ENCODE measurements at regions of chr3 and their contacts with region 1.

Region 1: DNA sequence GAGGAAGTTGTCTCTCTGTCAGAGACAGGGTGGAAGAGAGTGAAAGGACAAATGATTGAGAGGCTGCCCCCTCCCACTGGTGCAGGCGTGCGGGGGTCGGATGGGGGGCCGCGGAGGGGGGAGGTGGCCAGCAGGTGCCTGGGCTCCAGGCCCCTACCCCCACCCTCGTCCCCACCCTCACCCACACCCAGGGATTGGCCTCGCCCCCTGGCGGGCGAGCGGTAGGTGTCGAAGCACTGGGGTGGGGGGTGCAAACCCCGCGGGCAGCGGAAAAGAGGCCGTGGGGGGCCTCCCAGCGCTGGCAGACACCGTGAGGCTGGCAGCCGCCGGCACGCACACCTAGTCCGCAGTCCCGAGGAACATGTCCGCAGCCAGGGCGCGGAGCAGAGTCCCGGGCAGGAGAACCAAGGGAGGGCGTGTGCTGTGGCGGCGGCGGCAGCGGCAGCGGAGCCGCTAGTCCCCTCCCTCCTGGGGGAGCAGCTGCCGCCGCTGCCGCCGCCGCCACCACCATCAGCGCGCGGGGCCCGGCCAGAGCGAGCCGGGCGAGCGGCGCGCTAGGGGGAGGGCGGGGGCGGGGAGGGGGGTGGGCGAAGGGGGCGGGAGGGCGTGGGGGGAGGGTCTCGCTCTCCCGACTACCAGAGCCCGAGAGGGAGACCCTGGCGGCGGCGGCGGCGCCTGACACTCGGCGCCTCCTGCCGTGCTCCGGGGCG is at the start of gene KAT2B:
- DNase-seq: peak; percentile 70 to 94 (median 84)
- ATAC-seq: peak; percentile 72
- H3K4me3 ChIP-seq: peak within 1 kb of the TSS; percentile 82 to 91
- H3K4me3 Mint-ChIP-seq: peak within 1 kb of the TSS; percentile 98
- H3K27ac ChIP-seq: peak within 1 kb of the TSS; percentile 72 to 88
- H3K27ac Mint-ChIP-seq: peak within 1 kb of the TSS; percentile 98
- H3K4me1 ChIP-seq: peaks cover 45% of the 10 kb centered on the region
- H3K4me1 Mint-ChIP-seq: peaks cover 53% of the 10 kb centered on the region
- H3K27me3 ChIP-seq: no peaks in the 10 kb centered on the region
- H3K27me3 Mint-ChIP-seq: no peaks in the 10 kb centered on the region
- CTCF ChIP-seq: peak; percentile 95
- total RNA-seq, gene KAT2B: 37.5 to 37.9 TPM

Region 2: GRCh38 chr3:19885468-19885867 is 154.5 kb before region 1 on chr3:
- CTCF ChIA-PET with region 1: interaction called, 3 read pairs
- POLR2A ChIA-PET with region 1: no interaction called
- intact Hi-C with region 1: loop called in 1 of 2 experiments (anchors 2 kb)
- DNase-seq: peak in 2 of 9 experiments; percentile 40 to 53
- ATAC-seq: peak; percentile 20
- H3K4me3 ChIP-seq: no peak overlapping the region
- H3K4me3 Mint-ChIP-seq: no peak overlapping the region
- H3K27ac ChIP-seq: no peak overlapping the region
- H3K27ac Mint-ChIP-seq: no peak overlapping the region
- H3K4me1 ChIP-seq: no peaks in the 10 kb centered on the region
- H3K4me1 Mint-ChIP-seq: no peaks in the 10 kb centered on the region
- H3K27me3 ChIP-seq: no peaks in the 10 kb centered on the region
- H3K27me3 Mint-ChIP-seq: no peaks in the 10 kb centered on the region
- CTCF ChIP-seq: peak; percentile 57

Region 3: GRCh38 chr3:19934098-19934566 is 105.8 kb before region 1 on chr3 and contains the start of gene EFHB:
- CTCF ChIA-PET with region 1: no interaction called
- POLR2A ChIA-PET with region 1: no interaction called
- intact Hi-C with region 1: no loop called
- DNase-seq: no peak
- ATAC-seq: no peak
- H3K4me3 ChIP-seq: no peak within 1 kb of the TSS
- H3K4me3 Mint-ChIP-seq: no peak within 1 kb of the TSS
- H3K27ac ChIP-seq: no peak within 1 kb of the TSS
- H3K27ac Mint-ChIP-seq: no peak within 1 kb of the TSS
- H3K4me1 ChIP-seq: no peaks in the 10 kb centered on the region
- H3K4me1 Mint-ChIP-seq: no peaks in the 10 kb centered on the region
- H3K27me3 ChIP-seq: peaks cover 0 to 5% of the 10 kb centered on the region in 2 experiments
- H3K27me3 Mint-ChIP-seq: peaks cover 21% of the 10 kb centered on the region
- CTCF ChIP-seq: no peak
- total RNA-seq, gene EFHB: 0.44 to 1.9 TPM

Region 4: GRCh38 chr3:19994796-19995195 is 45.1 kb before region 1 on chr3:
- CTCF ChIA-PET with region 1: no interaction called
- POLR2A ChIA-PET with region 1: no interaction called
- intact Hi-C with region 1: loop called in 1 of 2 experiments (anchors 5 kb)
- DNase-seq: no peak
- ATAC-seq: no peak
- H3K4me3 ChIP-seq: no peak overlapping the region
- H3K4me3 Mint-ChIP-seq: no peak overlapping the region
- H3K27ac ChIP-seq: no peak overlapping the region
- H3K27ac Mint-ChIP-seq: no peak overlapping the region
- H3K4me1 ChIP-seq: no peaks in the 10 kb centered on the region
- H3K4me1 Mint-ChIP-seq: no peaks in the 10 kb centered on the region
- H3K27me3 ChIP-seq: no peaks in the 10 kb centered on the region
- H3K27me3 Mint-ChIP-seq: no peaks in the 10 kb centered on the region
- CTCF ChIP-seq: no peak

Region 5: GRCh38 chr3:20028818-20029430 is 11.0 kb before region 1 on chr3:
- CTCF ChIA-PET with region 1: no interaction called
- POLR2A ChIA-PET with region 1: no interaction called
- intact Hi-C with region 1: no loop called
- DNase-seq: no peak
- ATAC-seq: no peak
- H3K4me3 ChIP-seq: no peak overlapping the region
- H3K4me3 Mint-ChIP-seq: no peak overlapping the region
- H3K27ac ChIP-seq: no peak overlapping the region
- H3K27ac Mint-ChIP-seq: no peak overlapping the region
- H3K4me1 ChIP-seq: no peaks in the 10 kb centered on the region
- H3K4me1 Mint-ChIP-seq: no peaks in the 10 kb centered on the region
- H3K27me3 ChIP-seq: no peaks in the 10 kb centered on the region
- H3K27me3 Mint-ChIP-seq: no peaks in the 10 kb centered on the region
- CTCF ChIP-seq: no peak

Region 6: DNA sequence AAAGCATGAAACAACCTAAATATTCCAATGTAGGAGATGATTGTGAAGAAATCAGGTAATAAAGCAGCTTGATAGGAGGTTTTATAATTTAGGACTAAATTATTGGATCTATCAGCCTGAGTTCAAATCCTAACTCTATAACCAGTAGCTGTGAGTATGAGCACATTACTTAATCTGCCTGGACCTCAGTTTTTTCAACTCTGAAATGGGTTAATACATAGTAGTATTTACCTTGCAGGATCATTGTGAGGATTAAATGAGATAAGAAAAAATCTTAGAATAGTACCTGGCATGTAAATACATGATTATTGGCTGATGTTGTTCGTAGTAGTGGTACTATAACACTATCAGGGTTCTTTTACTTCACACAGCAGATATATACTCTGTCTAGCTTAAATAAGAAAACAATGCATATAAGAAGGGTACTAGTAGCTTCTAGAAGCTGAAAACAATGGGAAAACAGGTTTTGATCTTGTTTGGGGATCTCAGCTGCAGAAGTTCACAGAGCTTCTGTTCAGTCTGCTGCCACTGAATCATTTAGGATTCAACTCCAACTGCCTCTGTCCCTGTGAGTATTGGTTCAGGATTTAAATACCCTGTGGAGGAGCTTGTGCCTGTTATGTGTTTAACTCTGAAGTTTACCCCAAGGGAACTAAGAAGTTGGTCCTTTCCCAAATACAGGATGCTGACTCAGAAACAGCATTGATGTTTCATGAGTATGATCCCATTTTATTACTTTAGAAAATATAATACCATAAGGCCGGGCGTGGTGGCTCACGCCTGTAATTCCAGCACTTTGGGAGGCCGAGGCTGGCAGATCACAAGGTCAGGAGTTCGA is 34.5 kb after region 1 on chr3:
- CTCF ChIA-PET with region 1: interaction called, 3 read pairs
- POLR2A ChIA-PET with region 1: no interaction called
- intact Hi-C with region 1: loop called in 1 of 2 experiments (anchors 5 kb)
- DNase-seq: no peak
- ATAC-seq: no peak
- H3K4me3 ChIP-seq: no peak overlapping the region
- H3K4me3 Mint-ChIP-seq: no peak overlapping the region
- H3K27ac ChIP-seq: no peak overlapping the region
- H3K27ac Mint-ChIP-seq: no peak overlapping the region
- H3K4me1 ChIP-seq: no peaks in the 10 kb centered on the region
- H3K4me1 Mint-ChIP-seq: peaks cover 5% of the 10 kb centered on the region
- H3K27me3 ChIP-seq: no peaks in the 10 kb centered on the region
- H3K27me3 Mint-ChIP-seq: no peaks in the 10 kb centered on the region
- CTCF ChIP-seq: no peak

Region 7: GRCh38 chr3:20185701-20186598 is 146.0 kb after region 1 on chr3 and contains the start of gene SGO1:
- CTCF ChIA-PET with region 1: interaction called, 4 read pairs
- POLR2A ChIA-PET with region 1: interaction called, 14 read pairs
- intact Hi-C with region 1: loop called (anchors 1 to 2 kb)
- DNase-seq: peak; percentile 99 to 100 (median 100)
- ATAC-seq: peak; percentile 89
- H3K4me3 ChIP-seq: peak within 1 kb of the TSS; percentile 64 to 78
- H3K4me3 Mint-ChIP-seq: no peak within 1 kb of the TSS
- H3K27ac ChIP-seq: peak within 1 kb of the TSS; percentile 71 to 94
- H3K27ac Mint-ChIP-seq: no peak within 1 kb of the TSS
- H3K4me1 ChIP-seq: peaks cover 12% of the 10 kb centered on the region
- H3K4me1 Mint-ChIP-seq: no peaks in the 10 kb centered on the region
- H3K27me3 ChIP-seq: no peaks in the 10 kb centered on the region
- H3K27me3 Mint-ChIP-seq: no peaks in the 10 kb centered on the region
- CTCF ChIP-seq: no peak
- total RNA-seq, gene SGO1: 0.33 to 0.71 TPM

Region 8: GRCh38 chr3:20316238-20316637 is 276.3 kb after region 1 on chr3:
- CTCF ChIA-PET with region 1: no interaction called
- POLR2A ChIA-PET with region 1: no interaction called
- intact Hi-C with region 1: no loop called
- DNase-seq: no peak
- ATAC-seq: no peak
- H3K4me3 ChIP-seq: no peak overlapping the region
- H3K4me3 Mint-ChIP-seq: no peak overlapping the region
- H3K27ac ChIP-seq: no peak overlapping the region
- H3K27ac Mint-ChIP-seq: no peak overlapping the region
- H3K4me1 ChIP-seq: no peaks in the 10 kb centered on the region
- H3K4me1 Mint-ChIP-seq: no peaks in the 10 kb centered on the region
- H3K27me3 ChIP-seq: no peaks in the 10 kb centered on the region
- H3K27me3 Mint-ChIP-seq: no peaks in the 10 kb centered on the region
- CTCF ChIP-seq: no peak